Activated CD4-positive, alpha-beta T cell treated with anti-CD3 and anti-CD28 coated beads for 36 hours (primary cell): ENCODE measurements at regions of chr7 and their contacts with region 1.

Region 1: DNA sequence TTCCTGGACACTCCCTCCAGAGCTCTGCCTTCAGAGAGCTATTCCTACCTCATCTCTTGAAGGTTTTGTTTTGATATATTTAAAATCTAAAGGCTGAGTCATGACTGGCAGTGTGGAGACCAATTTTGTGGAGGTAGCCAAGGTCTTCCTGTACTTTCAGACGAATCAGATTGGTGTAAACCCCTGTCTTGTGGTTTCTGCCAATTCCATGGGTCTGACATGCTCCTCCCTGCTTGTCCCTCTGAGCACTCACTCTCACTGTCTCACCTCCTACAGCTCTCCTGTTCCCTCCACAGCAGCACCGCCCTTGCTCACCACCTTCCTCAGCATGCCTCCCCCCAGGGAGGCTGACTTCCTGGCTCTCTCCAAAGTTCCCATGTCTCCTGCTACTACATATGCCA is 179.8 kb downstream of the NPSR1 start:
- DNase-seq: no peak
- ATAC-seq: no peak
- H3K4me3 Mint-ChIP-seq: no peak overlapping the region
- H3K27ac Mint-ChIP-seq: no peak overlapping the region
- H3K4me1 Mint-ChIP-seq: peaks cover 3% of the 10 kb centered on the region
- H3K27me3 Mint-ChIP-seq: peaks cover 11% of the 10 kb centered on the region

Region 2: DNA sequence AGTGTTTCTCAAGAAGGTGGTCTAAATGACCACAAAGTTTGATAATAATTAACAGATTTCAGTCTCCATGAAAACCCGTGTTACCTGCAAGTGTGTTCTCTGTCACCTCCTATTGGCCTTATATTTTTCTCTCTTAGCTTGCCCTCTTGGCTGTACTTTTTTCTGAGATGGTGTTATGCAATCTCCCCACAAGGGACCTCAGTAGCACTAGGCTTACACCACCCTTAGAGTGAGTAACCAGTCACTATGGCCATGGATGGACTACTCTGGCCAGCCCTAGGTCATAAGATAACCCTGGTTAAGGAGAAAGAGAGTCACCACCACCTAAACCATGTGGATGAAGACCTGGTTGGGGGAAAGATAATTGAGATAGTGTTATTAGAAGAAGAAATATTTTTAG is 103.0 kb before region 1 on chr7:
- CTCF ChIA-PET with region 1: no interaction called
- POLR2A ChIA-PET with region 1: no interaction called
- intact Hi-C with region 1: no loop called
- DNase-seq: no peak
- ATAC-seq: no peak
- H3K4me3 Mint-ChIP-seq: no peak overlapping the region
- H3K27ac Mint-ChIP-seq: no peak overlapping the region
- H3K4me1 Mint-ChIP-seq: no peaks in the 10 kb centered on the region
- H3K27me3 Mint-ChIP-seq: peaks cover 1% of the 10 kb centered on the region

Region 3: DNA sequence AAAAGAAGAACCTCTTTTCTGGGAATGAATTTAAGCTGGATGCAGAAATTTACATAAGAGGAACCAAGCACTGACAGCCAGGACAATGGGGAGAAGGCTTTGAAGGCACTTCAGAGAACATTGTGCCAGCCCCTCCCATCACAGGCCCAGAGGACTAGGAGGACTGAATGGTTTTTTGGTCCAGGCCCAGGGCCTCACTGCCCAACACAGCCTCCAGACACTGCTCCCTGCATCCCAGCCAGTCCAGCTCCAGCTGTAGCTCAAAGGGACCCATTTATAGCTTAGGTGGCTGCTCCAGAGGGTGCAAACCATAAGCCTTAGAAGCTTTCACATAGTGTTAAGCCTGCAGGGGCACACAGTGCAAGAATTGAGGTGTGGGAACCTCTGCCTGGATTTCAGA is 57.4 kb after region 1 on chr7:
- CTCF ChIA-PET with region 1: no interaction called
- POLR2A ChIA-PET with region 1: no interaction called
- intact Hi-C with region 1: loop called in 1 of 2 experiments (anchors 10 kb)
- DNase-seq: no peak
- ATAC-seq: no peak
- H3K4me3 Mint-ChIP-seq: no peak overlapping the region
- H3K27ac Mint-ChIP-seq: no peak overlapping the region
- H3K4me1 Mint-ChIP-seq: no peaks in the 10 kb centered on the region
- H3K27me3 Mint-ChIP-seq: peaks cover 11% of the 10 kb centered on the region